Heart right ventricle (tissue), 16 donors: ENCODE measurements at regions of chr3 and their contacts with region 1.

Region 1: DNA sequence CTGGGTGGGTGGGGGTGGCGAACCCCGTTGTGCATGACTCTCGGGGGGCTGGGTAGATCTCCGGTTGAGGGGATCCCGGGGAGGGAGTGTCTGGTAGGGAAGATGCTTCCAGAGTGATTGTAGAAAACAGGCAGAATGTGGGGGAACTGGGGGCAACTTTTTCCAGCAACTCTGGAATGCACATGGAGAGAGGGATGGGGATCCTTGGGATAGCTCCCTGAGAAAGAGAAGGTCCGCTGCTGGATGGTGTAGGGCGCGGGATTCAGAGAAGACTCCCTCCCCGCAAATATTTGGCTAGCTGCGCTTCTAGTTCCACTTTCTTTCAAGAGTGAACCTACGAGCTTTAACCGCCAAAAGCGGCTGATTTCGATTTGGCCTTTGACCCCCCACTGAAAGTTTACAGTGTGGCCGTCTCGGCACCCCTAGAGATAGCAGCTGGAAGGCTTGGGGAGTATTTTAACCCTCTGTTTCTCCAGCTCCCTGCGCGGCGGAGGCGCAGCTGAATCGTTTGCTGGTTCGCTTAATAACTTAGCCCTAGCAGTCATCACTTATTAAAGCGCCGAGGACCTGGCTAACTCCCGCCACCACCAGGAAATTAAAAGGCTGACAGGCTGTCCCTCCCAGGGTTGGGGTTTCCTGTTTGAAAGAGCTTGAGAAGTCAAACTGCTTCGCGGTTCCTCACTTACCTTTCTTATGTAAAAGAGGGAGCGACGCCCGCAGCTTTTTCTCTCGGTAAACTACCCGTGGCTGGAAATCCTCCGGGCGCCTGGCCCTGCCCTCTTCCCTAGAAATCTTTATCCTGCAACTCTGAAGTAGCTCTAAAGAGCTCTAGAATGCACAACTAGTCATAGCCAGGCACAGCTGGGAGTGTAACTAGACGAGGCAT is 1.2 kb downstream of the PHLDB2 start:
- DNase-seq: peak; percentile 68 to 88
- ATAC-seq: peak; percentile 68 to 86 (median 80)
- H3K4me3 ChIP-seq: peak overlapping the region; percentile 75 to 90 (median 86)
- H3K27ac ChIP-seq: peak overlapping the region; percentile 93 to 100 (median 98)
- H3K4me1 ChIP-seq: peaks cover 2 to 59% (median 37%) of the 10 kb centered on the region in 9 donors
- H3K27me3 ChIP-seq: peaks cover 0 to 25% (median 0%) of the 10 kb centered on the region in 7 donors
- CTCF ChIP-seq: peak; percentile 40 to 75 (median 61)

Region 2: GRCh38 chr3:111165411-111165810 is 694.8 kb before region 1 on chr3:
- intact Hi-C with region 1: no loop called
- DNase-seq: no peak
- ATAC-seq: no peak
- H3K4me3 ChIP-seq: no peak overlapping the region
- H3K27ac ChIP-seq: no peak overlapping the region
- H3K4me1 ChIP-seq: no peaks in the 10 kb centered on the region
- H3K27me3 ChIP-seq: no peaks in the 10 kb centered on the region
- CTCF ChIP-seq: no peak

Region 3: GRCh38 chr3:111717601-111718000 is 142.6 kb before region 1 on chr3:
- intact Hi-C with region 1: loop called in 9 of 10 experiments (anchors 1 to 5 kb)
- DNase-seq: peak; percentile 51 to 77
- ATAC-seq: peak; percentile 82 to 93 (median 90)
- H3K4me3 ChIP-seq: no peak overlapping the region
- H3K27ac ChIP-seq: peak overlapping the region in 6 of 10 donors; percentile 12 to 38 (median 23)
- H3K4me1 ChIP-seq: peaks cover 0 to 41% (median 19%) of the 10 kb centered on the region in 9 donors
- H3K27me3 ChIP-seq: no peaks in the 10 kb centered on the region
- CTCF ChIP-seq: peak; percentile 92 to 97 (median 94)

Region 4: DNA sequence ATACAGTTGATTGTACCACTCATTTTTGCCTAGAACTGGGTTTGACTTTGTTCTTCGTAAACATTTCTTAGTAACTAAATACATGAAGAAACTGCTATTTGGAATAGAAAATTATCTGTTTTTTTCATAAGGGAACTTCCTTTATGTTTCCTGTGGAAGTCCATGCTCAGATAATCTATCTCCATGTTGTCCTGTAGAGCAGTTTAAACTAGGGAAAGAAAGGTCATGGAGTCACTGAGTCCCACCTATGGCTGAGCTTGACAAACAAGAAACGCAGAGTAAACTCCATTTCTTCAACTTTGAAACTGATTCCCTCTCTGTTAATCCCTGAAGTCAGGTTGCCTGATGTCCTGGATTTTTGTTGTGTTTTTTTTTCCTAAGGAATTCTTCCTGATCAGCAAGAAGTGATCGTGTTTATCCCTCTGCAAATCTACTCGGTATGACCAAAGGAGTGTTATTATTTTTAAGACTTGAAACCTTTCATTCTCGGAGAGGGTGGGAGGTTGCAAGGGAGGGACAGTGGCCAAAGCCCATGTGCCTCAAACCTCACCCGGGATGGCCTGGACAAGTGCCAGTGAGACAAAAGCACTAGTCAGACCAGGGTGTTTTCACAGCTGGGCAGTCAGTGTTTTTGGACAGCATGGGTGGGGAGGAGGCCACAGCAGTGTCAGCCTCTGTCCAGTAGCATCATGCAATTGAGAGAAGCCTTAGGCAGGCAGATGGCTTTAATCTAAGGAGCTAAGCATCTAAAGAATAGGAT is 130.9 kb before region 1 on chr3:
- intact Hi-C with region 1: loop called in 1 of 10 experiments (anchors 5 kb)
- DNase-seq: peak; percentile 71 to 83
- ATAC-seq: peak; percentile 70 to 92 (median 86)
- H3K4me3 ChIP-seq: no peak overlapping the region
- H3K27ac ChIP-seq: peak overlapping the region in 5 of 10 donors; percentile 11 to 61 (median 42)
- H3K4me1 ChIP-seq: peaks cover 2 to 26% (median 16%) of the 10 kb centered on the region in 9 donors
- H3K27me3 ChIP-seq: no peaks in the 10 kb centered on the region
- CTCF ChIP-seq: no peak

Region 5: GRCh38 chr3:111803123-111803593 is 57.1 kb before region 1 on chr3:
- intact Hi-C with region 1: no loop called
- DNase-seq: peak; percentile 39
- ATAC-seq: peak; percentile 63 to 88 (median 74)
- H3K4me3 ChIP-seq: no peak overlapping the region
- H3K27ac ChIP-seq: peak overlapping the region in 8 of 10 donors; percentile 48 to 78 (median 61)
- H3K4me1 ChIP-seq: peaks cover 0 to 34% (median 23%) of the 10 kb centered on the region in 9 donors
- H3K27me3 ChIP-seq: no peaks in the 10 kb centered on the region
- CTCF ChIP-seq: no peak

Region 6: DNA sequence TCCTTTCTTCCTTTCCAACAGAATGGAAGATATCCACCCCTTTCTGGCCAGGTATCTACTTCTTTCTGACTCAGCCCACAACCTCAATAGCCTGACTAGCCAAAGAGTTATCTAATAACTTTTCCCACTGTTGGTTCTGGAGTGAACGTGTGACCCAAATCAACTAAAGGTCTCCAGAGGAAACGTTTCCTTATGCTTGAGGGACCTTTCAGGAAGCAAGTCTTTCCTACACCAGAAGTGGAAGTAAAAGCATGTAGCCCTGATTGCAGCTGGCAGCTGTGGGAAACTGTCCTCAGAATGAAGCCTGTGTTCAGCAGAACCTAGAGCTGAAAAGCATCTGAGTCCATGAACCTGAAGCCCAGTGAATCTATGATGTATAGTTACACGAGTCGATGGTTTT is 35.9 kb before region 1 on chr3:
- intact Hi-C with region 1: loop called in 3 of 10 experiments (anchors 5 kb)
- DNase-seq: peak in 1 of 2 donors; percentile 13
- ATAC-seq: peak in 5 of 8 donors; percentile 35 to 51 (median 38)
- H3K4me3 ChIP-seq: no peak overlapping the region
- H3K27ac ChIP-seq: peak overlapping the region in 8 of 10 donors; percentile 26 to 75 (median 46)
- H3K4me1 ChIP-seq: peaks cover 0 to 46% (median 22%) of the 10 kb centered on the region in 9 donors
- H3K27me3 ChIP-seq: no peaks in the 10 kb centered on the region
- CTCF ChIP-seq: no peak

Region 7: DNA sequence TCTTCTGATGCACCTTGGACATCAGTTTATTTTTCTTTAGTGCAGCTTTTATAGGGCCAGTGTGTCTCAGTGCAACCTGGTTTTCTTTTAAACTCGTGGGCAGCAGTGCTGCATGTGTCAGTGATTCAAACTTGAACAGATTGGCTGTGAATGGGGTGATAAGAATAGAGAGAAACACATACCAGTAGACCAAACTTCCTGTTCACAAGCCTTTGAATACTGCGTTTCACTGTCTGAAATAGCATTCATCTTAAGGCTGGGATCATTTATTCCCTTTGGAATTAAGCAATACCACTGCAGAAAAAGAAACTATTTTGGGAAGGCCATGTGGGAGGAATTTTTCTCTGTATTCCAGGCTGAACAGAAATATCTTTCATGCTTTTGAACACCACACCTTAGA is 50.6 kb after region 1 on chr3:
- intact Hi-C with region 1: loop called in 4 of 10 experiments (anchors 5 to 10 kb)
- DNase-seq: no peak
- ATAC-seq: peak; percentile 42 to 91 (median 74)
- H3K4me3 ChIP-seq: no peak overlapping the region
- H3K27ac ChIP-seq: peak overlapping the region in 9 of 10 donors; percentile 32 to 65 (median 48)
- H3K4me1 ChIP-seq: peaks cover 8 to 86% (median 76%) of the 10 kb centered on the region in 9 donors
- H3K27me3 ChIP-seq: no peaks in the 10 kb centered on the region
- CTCF ChIP-seq: no peak

Region 8: GRCh38 chr3:111924283-111924682 is 64.1 kb after region 1 on chr3:
- intact Hi-C with region 1: loop called in 5 of 10 experiments (anchors 5 to 10 kb)
- DNase-seq: peak; percentile 56 to 76
- ATAC-seq: peak; percentile 90 to 99 (median 97)
- H3K4me3 ChIP-seq: no peak overlapping the region
- H3K27ac ChIP-seq: peak overlapping the region in 9 of 10 donors; percentile 10 to 76 (median 57)
- H3K4me1 ChIP-seq: peaks cover 10 to 52% (median 41%) of the 10 kb centered on the region in 9 donors
- H3K27me3 ChIP-seq: no peaks in the 10 kb centered on the region
- CTCF ChIP-seq: no peak